Sciatic nerve (tissue), 2 donors: ENCODE measurements at regions of chr2 and their contacts with region 1.

Region 1: DNA sequence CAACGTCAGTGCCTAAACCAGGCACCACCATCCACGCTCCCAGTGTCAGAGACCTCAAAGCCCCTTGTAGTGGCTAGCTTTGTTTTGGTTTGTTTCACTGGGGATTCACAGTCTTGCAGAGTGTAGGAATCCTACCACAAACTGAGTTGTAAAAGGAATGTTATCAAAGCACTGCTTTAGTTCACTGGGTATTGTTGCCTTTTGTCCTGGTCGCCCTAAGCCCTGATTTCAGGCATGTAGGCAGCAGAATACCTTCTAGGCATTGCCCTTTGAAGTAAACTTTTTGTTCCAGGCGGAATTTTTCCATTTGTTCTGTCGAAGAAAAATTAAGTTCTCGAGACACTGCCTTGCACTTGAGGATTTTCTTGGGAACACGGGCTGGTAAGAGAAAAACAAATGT is 29.4 kb downstream of the PTMA start:
- DNase-seq: no peak
- ATAC-seq: no peak

Region 2: GRCh38 chr2:231687133-231687852 is 50.5 kb before region 1 on chr2:
- intact Hi-C with region 1: no loop called
- DNase-seq: peak; percentile 78
- ATAC-seq: peak; percentile 78

Region 3: GRCh38 chr2:233449921-233450863 is 1712.4 kb after region 1 on chr2:
- intact Hi-C with region 1: loop called (anchors 5 kb)
- DNase-seq: peak; percentile 43
- ATAC-seq: no peak